ENCODE measurements at regions of chr10 and their contacts with region 1.

Region 1: DNA sequence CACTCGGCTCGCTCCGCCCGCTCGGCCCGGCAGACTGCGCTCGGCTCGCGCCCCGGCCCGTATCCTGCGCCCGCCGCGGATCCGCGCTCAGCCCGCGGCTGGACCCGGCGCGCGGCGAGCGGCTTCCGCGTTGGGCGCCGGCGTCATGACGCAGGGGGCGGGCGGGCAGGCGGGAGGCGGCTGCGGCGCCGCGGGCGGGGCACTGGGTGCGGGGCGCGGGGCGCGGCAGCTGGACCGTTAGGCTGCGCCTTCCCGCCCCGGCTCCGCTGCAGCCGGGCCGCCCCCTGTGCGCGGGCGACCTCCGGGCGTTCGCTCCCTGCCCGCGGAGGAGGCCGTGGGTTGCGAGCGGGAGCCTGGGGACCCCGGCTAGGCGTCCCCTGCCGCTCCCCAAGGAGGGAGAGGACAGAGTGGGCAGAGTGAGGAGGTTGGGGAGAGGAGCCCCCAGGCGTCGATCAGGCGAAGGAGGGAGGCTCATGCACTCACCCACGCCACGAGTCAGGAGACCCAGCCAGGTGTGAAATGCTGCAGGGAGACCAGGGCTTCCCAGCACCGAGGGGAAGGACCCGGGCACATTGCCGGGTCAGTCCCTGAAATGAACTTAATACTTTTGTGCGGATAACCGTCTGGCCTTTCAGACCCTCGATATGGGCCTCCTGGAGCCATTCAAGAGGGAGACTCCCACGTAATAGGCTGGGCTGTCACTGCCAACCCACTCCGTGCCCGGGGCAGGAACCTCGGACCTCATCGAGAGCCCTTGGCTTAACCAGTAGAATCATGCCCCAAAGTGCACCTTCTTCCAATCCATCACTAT is at the start of gene PIP4K2A:
- DNase-seq: peak; percentile 74
- H3K4me3 Mint-ChIP-seq: peak within 1 kb of the TSS; percentile 88
- H3K27ac Mint-ChIP-seq: peak within 1 kb of the TSS; percentile 79
- H3K4me1 Mint-ChIP-seq: peaks cover 27% of the 10 kb centered on the region
- H3K27me3 Mint-ChIP-seq: no peaks in the 10 kb centered on the region
- total RNA-seq, gene PIP4K2A: 68.0 to 74.1 TPM

Region 2: GRCh38 chr10:21525367-21526183 is 1189.1 kb before region 1 on chr10 and contains the start of gene SKIDA1:
- CTCF ChIA-PET with region 1: no interaction called
- intact Hi-C with region 1: loop called (anchors 10 kb)
- DNase-seq: peak; percentile 72
- H3K4me3 Mint-ChIP-seq: peak within 1 kb of the TSS; percentile 94
- H3K27ac Mint-ChIP-seq: peak within 1 kb of the TSS; percentile 92
- H3K4me1 Mint-ChIP-seq: peaks cover 22% of the 10 kb centered on the region
- H3K27me3 Mint-ChIP-seq: peaks cover 28% of the 10 kb centered on the region
- total RNA-seq, gene SKIDA1: 0.10 TPM in 1 of 2 experiments, not detected in the other

Region 3: DNA sequence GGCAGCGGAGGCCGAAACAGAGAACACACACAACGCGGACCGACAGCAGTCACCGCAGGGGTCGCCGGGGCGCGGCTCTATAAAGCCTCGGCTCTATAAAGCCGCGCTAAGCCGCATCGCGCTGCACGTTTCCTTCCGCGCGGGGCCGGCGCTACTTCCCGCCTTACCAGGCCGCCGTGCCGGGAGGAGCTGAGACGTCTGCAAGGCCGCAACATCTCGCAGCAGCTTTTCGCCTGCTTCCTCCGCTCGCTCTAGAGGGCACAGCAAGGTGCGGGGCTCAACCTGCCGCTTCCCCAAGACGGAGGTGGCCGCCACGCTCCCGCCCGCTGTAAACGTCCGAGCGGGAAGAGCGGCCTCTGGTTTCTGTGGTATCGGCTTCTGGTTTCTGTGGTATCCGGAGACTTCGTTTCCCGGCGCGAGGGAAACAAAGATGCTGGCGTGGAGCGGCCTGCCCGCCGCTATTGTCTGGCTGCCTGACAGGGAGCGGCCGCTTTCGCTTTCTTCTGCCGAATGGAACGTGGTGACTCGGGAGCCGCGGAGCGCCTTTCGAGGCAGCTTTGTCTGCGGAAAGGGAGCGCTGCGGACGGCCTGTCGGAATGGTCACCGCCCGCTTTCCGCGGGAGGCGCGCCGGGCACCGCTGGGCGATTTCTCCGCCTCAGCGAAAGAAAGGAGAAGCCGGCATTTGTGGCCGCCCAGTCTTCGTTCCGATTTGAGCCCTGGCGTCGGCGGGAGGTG is 277.6 kb before region 1 on chr10:
- CTCF ChIA-PET with region 1: no interaction called
- intact Hi-C with region 1: loop called (anchors 5 kb)
- DNase-seq: peak; percentile 84
- H3K4me3 Mint-ChIP-seq: peak overlapping the region; percentile 84
- H3K27ac Mint-ChIP-seq: peak overlapping the region; percentile 92
- H3K4me1 Mint-ChIP-seq: peaks cover 31% of the 10 kb centered on the region
- H3K27me3 Mint-ChIP-seq: no peaks in the 10 kb centered on the region

Region 4: GRCh38 chr10:22655311-22655981 is 59.2 kb before region 1 on chr10:
- CTCF ChIA-PET with region 1: interaction called, 6 read pairs
- intact Hi-C with region 1: loop called (anchors 1 kb)
- DNase-seq: peak; percentile 69
- H3K4me3 Mint-ChIP-seq: peak overlapping the region; percentile 46
- H3K27ac Mint-ChIP-seq: peak overlapping the region; percentile 89
- H3K4me1 Mint-ChIP-seq: peaks cover 99% of the 10 kb centered on the region
- H3K27me3 Mint-ChIP-seq: no peaks in the 10 kb centered on the region

Region 5: GRCh38 chr10:22693371-22693784 is 21.3 kb before region 1 on chr10:
- CTCF ChIA-PET with region 1: interaction called, 3 read pairs
- intact Hi-C with region 1: loop called (anchors 1 kb)
- DNase-seq: peak; percentile 42
- H3K4me3 Mint-ChIP-seq: peak overlapping the region; percentile 25
- H3K27ac Mint-ChIP-seq: peak overlapping the region; percentile 85
- H3K4me1 Mint-ChIP-seq: peaks cover 84% of the 10 kb centered on the region
- H3K27me3 Mint-ChIP-seq: no peaks in the 10 kb centered on the region

Measured in activated naive CD4-positive, alpha-beta T cell treated with anti-CD3 and anti-CD28 coated beads for 36 hours (primary cell).